HCT116 (cell line): ENCODE measurements at regions of chr15 and their contacts with region 1.

Region 1: DNA sequence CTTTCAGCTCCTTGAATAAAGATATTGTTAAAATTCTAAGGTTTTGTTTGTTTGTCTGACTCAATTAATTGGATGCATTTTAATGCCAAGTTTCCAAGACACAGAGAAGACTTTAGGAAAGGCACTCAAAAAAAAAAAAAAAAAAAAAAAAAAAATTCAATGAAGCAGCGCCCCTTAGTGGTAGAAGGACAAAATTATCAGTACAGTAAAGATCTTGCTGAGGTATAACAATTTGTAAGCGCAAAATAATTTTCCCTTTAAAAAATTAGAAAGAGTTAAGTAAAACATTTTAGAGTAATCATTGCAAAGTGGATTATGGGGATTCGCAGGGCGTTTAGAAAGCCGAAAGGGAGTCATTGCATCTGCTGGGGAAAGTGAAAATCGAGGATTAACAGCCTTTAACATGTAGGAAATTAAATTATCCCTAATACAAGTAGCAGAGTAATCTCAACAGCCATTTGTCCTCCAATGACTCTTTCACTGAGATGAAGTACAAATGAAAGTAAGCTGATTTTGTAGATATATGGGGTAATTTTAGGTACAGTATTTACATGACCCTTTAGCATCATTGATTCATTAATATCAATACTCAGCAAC is 5.8 kb upstream of the DIS3L start:
- DNase-seq: no peak
- ATAC-seq: peak; percentile 38; the same call in 1 of the 2 replicates
- H3K4me3 ChIP-seq: no peak overlapping the region
- H3K27ac ChIP-seq: no peak overlapping the region
- H3K4me1 ChIP-seq: peaks cover 7 to 28% of the 10 kb centered on the region in 2 experiments; a peak in 3 of 4 replicates
- H3K27me3 ChIP-seq: no peaks in the 10 kb centered on the region
- CTCF ChIP-seq: peak; percentile 51 to 80 (median 63); a peak in 5 of 6 replicates
- POLR2A ChIP-seq: no peak
- RAD21 ChIP-seq: peak; percentile 73

Region 2: GRCh38 chr15:65655026-65655425 is 632.5 kb before region 1 on chr15:
- CTCF ChIA-PET with region 1: no interaction called
- POLR2A ChIA-PET with region 1: no interaction called
- RAD21 ChIA-PET with region 1: no interaction called
- intact Hi-C with region 1: no loop called
- DNase-seq: no peak
- ATAC-seq: no peak
- H3K4me3 ChIP-seq: no peak overlapping the region
- H3K27ac ChIP-seq: no peak overlapping the region
- H3K4me1 ChIP-seq: peaks cover 3 to 26% of the 10 kb centered on the region in 2 experiments; a peak in 3 of 4 replicates
- H3K27me3 ChIP-seq: no peaks in the 10 kb centered on the region
- CTCF ChIP-seq: no peak
- POLR2A ChIP-seq: no peak
- RAD21 ChIP-seq: no peak

Region 3: DNA sequence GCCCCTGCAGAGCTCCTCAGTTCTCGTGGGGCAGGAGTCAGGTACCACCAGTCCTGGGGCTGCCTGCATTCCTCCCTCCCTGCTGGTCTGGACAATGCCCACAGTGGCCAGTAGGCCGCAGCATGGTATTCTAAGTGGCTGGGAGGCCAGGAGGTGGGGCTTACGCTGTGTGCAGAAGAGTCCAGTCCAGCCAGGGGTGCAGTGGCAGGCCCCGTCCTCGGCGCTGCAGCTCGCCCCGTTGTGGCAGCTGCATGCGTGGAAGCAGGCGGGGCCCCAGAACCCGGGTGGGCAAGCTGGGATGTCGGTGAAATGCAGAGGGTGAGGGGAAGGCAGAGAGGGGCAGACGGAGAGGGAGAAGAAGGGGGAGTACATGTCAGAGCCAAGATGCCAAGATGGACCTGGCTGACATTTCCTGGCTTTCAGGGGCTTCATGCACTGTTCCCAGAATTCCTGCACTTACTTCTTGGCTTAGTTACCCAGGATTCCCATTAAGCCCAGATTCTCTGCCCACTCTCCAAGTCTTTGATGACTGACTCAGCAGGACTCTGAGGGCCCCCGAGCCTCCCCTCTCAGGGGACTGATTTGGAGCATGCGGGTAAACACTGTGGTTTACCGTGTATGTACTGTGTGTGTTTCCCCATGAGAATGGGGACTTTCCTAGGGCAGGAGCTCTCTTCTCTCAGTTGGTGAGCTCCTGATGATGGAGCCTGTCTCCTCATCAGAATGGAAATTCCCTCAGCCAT is 370.7 kb before region 1 on chr15:
- CTCF ChIA-PET with region 1: no interaction called
- POLR2A ChIA-PET with region 1: no interaction called
- RAD21 ChIA-PET with region 1: no interaction called
- intact Hi-C with region 1: loop called (anchors 5 kb)
- DNase-seq: no peak
- ATAC-seq: peak; percentile 99
- H3K4me3 ChIP-seq: no peak overlapping the region
- H3K27ac ChIP-seq: no peak overlapping the region
- H3K4me1 ChIP-seq: no peaks in the 10 kb centered on the region
- H3K27me3 ChIP-seq: no peaks in the 10 kb centered on the region
- CTCF ChIP-seq: peak; percentile 53 to 66 (median 60)
- POLR2A ChIP-seq: no peak
- RAD21 ChIP-seq: peak; percentile 72

Region 4: DNA sequence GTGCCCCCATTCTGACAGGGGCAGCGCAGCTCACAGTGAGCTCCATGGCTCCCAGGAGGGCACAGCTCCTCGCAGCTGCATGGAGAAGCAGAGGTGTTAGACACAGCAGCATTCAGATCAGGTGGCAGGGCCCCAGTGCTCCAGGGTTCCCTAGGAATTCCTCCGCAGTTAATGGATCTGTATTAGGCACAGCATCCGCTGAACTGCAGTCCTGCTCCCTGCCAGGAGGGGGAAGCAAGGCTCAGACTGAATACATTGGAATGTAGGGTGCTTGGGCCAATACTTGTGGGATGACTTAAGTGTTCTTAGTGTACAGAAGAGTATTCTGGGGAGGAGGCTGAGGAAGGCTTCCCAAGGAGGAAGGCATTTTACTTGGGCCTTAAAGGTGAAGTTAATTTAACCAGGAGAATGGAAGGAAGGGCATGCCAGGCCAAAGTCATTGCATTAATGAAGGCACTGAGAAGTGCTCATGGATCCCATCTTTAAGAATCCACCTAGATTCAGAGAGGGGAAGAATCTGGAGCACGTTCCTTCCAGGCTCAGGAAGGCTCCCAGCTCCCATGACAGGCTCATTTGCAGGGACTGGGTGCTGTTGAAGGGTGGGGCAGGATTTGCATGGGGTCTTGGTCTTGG is 306.6 kb before region 1 on chr15:
- CTCF ChIA-PET with region 1: no interaction called
- POLR2A ChIA-PET with region 1: no interaction called
- RAD21 ChIA-PET with region 1: no interaction called
- intact Hi-C with region 1: loop called (anchors 5 kb)
- DNase-seq: peak; percentile 56
- ATAC-seq: peak; percentile 72
- H3K4me3 ChIP-seq: no peak overlapping the region
- H3K27ac ChIP-seq: no peak overlapping the region; the same call in 1 of the 2 replicates
- H3K4me1 ChIP-seq: peaks cover 6 to 26% of the 10 kb centered on the region in 2 experiments
- H3K27me3 ChIP-seq: peaks cover 10% of the 10 kb centered on the region; the same call in 1 of the 2 replicates
- CTCF ChIP-seq: peak; percentile 68 to 84 (median 83); a peak in 5 of 6 replicates
- POLR2A ChIP-seq: no peak
- RAD21 ChIP-seq: peak; percentile 78

Region 5: DNA sequence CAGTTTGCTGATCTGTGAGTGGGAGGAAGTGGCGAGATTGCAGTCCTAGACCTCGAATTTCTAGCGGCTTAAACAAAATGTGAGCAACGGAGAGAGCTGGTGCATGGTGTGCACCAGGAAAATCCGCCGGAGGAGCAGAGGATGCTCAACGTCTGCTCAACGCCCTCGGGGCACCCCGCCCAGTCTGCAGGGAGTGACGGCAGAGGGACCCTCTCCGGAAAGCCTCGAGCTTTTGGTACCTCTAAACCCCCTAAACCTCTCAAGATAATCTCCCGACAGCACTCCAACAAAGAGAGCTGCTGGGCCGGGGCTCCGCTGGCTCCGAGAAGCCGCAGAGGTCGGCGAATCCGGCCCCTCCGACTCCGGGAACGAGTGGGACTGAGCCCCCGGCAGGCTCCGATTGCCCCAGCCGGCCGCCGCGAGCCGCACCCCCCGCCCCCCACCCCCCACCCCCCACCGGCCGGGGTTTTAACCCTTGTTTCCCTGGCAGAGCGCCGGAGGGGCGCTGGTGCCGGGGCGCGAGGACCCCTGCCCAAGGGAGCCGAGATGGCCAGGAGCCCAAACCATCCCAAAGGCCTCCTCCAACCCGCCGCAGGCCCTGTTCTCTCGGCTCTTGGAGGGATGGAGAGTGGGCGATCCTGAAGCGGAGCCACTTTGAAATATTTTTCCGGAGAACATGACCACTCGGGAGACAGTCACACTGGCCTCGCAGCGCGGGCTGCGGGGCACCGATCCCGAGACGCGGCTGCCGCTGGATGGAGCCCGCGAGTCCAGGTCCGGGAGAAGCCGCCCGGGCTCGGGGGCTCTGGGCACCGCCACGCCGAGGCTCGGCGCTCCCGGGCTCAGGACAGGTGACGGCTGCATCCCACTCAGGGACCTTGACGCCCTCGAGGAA is 35.5 kb before region 1 on chr15:
- CTCF ChIA-PET with region 1: no interaction called
- POLR2A ChIA-PET with region 1: no interaction called
- RAD21 ChIA-PET with region 1: interaction called in 1 of 2 experiments, 4 read pairs
- intact Hi-C with region 1: loop called (anchors 5 kb)
- DNase-seq: peak; percentile 27
- ATAC-seq: peak; percentile 87
- H3K4me3 ChIP-seq: peak overlapping the region; percentile 65 to 78
- H3K27ac ChIP-seq: no peak overlapping the region
- H3K4me1 ChIP-seq: peaks cover 0 to 20% of the 10 kb centered on the region in 2 experiments; a peak in 2 of 4 replicates
- H3K27me3 ChIP-seq: peaks cover 3% of the 10 kb centered on the region; the same call in 1 of the 2 replicates
- CTCF ChIP-seq: peak; percentile 54 to 89 (median 70); a peak in 5 of 6 replicates
- POLR2A ChIP-seq: no peak
- RAD21 ChIP-seq: peak; percentile 57

Region 6: DNA sequence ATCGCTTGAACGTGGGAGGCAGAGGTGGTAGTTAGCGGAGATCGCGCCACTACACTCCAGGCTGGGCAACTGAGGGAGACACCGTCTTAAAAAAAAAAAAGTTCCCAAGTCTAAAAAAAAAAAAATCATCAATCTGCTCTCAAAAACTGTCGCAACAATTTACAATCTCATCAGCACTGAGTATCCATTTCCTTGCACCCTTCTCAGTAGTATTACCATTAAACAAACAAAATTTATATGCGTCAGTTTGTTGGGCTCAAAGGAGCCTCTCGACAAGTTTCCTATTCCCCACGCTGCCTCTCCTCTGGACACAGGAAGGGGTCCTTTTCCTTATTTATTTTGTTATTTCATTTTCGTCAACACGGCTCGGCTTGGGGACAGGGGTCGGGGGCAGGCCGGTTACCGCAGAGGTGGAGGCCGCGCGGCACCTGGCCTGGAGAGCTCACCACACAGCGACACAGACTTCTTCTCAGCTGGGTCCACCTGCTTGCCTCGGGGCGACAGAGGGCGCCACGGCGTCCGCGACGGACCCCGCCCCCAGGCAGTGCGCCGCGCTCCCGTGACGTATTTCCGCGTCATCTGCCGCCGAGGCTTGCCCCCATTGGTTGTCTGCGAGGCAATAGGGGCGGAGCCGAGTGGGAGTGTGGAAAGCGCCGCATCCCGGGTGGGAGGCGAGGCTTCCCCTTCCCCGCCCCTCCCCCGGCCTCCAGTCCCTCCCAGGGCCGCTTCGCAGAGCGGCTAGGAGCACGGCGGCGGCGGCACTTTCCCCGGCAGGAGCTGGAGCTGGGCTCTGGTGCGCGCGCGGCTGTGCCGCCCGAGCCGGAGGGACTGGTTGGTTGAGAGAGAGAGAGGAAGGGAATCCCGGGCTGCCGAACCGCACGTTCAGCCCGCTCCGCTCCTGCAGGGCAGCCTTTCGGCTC is 98.9 kb after region 1 on chr15 and contains the start of gene MAP2K1:
- CTCF ChIA-PET with region 1: no interaction called
- POLR2A ChIA-PET with region 1: no interaction called
- RAD21 ChIA-PET with region 1: no interaction called
- intact Hi-C with region 1: no loop called
- DNase-seq: peak; percentile 90
- ATAC-seq: peak; percentile 93
- H3K4me3 ChIP-seq: peak within 1 kb of the TSS; percentile 64 to 86
- H3K27ac ChIP-seq: peak within 1 kb of the TSS; percentile 79
- H3K4me1 ChIP-seq: peaks cover 4 to 28% of the 10 kb centered on the region in 2 experiments; a peak in 3 of 4 replicates
- H3K27me3 ChIP-seq: no peaks in the 10 kb centered on the region
- CTCF ChIP-seq: peak; percentile 52; a peak in 3 of 6 replicates
- POLR2A ChIP-seq: peak; percentile 52
- RAD21 ChIP-seq: peak; percentile 54
- total RNA-seq, gene MAP2K1: 52.3 TPM

Region 7: GRCh38 chr15:66433726-66434125 is 146.2 kb after region 1 on chr15:
- CTCF ChIA-PET with region 1: no interaction called
- POLR2A ChIA-PET with region 1: no interaction called
- RAD21 ChIA-PET with region 1: no interaction called
- intact Hi-C with region 1: no loop called
- DNase-seq: no peak
- ATAC-seq: no peak
- H3K4me3 ChIP-seq: no peak overlapping the region
- H3K27ac ChIP-seq: no peak overlapping the region
- H3K4me1 ChIP-seq: no peaks in the 10 kb centered on the region
- H3K27me3 ChIP-seq: no peaks in the 10 kb centered on the region
- CTCF ChIP-seq: no peak
- POLR2A ChIP-seq: no peak
- RAD21 ChIP-seq: no peak

Region 8: GRCh38 chr15:66997212-66997611 is 709.7 kb after region 1 on chr15:
- CTCF ChIA-PET with region 1: no interaction called
- POLR2A ChIA-PET with region 1: no interaction called
- RAD21 ChIA-PET with region 1: no interaction called
- intact Hi-C with region 1: no loop called
- DNase-seq: no peak
- ATAC-seq: peak; percentile 89
- H3K4me3 ChIP-seq: no peak overlapping the region
- H3K27ac ChIP-seq: no peak overlapping the region
- H3K4me1 ChIP-seq: peaks cover 14 to 27% of the 10 kb centered on the region in 2 experiments
- H3K27me3 ChIP-seq: no peaks in the 10 kb centered on the region
- CTCF ChIP-seq: no peak
- POLR2A ChIP-seq: no peak
- RAD21 ChIP-seq: no peak